ENCODE measurements at regions of chr1 and their contacts with region 1.

Region 1: GRCh38 chr1:161225534-161226319 is at the start of gene TOMM40L:
- DNase-seq: peak; percentile 96
- ATAC-seq: peak; percentile 98
- H3K4me3 Mint-ChIP-seq: peak within 1 kb of the TSS; percentile 95
- H3K27ac Mint-ChIP-seq: peak within 1 kb of the TSS; percentile 99
- H3K4me1 Mint-ChIP-seq: peaks cover 43% of the 10 kb centered on the region
- H3K27me3 Mint-ChIP-seq: no peaks in the 10 kb centered on the region
- total RNA-seq, gene TOMM40L: 19.1 to 22.0 TPM

Region 2: GRCh38 chr1:161098210-161099068 is 127.3 kb before region 1 on chr1 and contains the start of gene KLHDC9:
- CTCF ChIA-PET with region 1: no interaction called
- POLR2A ChIA-PET with region 1: no interaction called
- DNase-seq: peak; percentile 86
- ATAC-seq: peak; percentile 78
- H3K4me3 Mint-ChIP-seq: peak within 1 kb of the TSS; percentile 80
- H3K27ac Mint-ChIP-seq: peak within 1 kb of the TSS; percentile 91
- H3K4me1 Mint-ChIP-seq: peaks cover 30% of the 10 kb centered on the region
- H3K27me3 Mint-ChIP-seq: peaks cover 2% of the 10 kb centered on the region
- total RNA-seq, gene KLHDC9: 0.61 to 0.91 TPM

Region 3: DNA sequence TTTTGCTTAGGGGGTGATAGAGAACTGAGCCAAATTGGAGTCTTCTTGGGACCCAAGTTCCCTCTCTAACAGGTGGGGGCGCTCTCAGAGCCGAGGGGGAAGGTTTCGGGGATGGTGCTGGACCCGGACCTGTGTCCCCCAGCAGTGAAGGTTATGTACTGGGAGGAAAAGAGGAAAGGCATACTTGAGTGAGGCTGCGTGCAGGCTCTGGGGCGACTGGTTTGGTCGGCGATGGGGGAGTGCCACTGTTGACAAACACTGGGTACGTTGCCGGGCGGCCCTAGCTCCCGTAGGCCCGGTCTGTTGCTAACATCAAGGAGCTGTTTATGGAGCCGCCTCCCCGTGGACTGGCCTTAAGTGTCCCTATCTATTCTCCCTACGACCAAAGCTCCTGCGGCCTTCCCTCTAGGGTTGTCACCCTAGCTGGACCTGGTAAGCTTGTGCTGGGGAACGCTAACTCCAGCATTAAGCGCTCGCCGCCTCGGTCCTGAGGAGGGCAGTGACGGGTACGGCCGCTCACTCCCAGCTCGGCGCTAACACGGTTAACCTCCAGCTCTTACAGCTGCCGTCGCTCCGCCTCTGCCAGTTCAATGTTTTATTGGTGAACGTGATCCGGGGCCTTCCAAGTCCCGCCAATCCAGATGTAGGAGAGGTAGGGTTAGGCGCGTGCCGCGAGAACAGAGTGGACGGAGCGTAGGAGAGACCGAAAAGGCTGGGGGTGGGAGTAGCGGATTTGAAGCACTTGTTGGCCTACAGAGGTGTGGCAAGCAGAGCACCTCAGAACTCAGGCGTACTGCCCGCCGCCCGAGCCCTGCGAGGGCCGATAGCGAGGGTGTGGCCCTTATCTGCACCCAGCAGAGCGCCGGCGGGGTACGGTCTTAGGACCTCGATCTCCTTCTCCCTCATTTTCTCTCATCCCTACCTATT is 59.7 kb before region 1 on chr1 and contains the start of gene PPOX:
- CTCF ChIA-PET with region 1: interaction called, 35 read pairs
- POLR2A ChIA-PET with region 1: interaction called, 13 read pairs
- DNase-seq: peak; percentile 98
- ATAC-seq: peak; percentile 93
- H3K4me3 Mint-ChIP-seq: peak within 1 kb of the TSS; percentile 90
- H3K27ac Mint-ChIP-seq: peak within 1 kb of the TSS; percentile 96
- H3K4me1 Mint-ChIP-seq: peaks cover 36% of the 10 kb centered on the region
- H3K27me3 Mint-ChIP-seq: no peaks in the 10 kb centered on the region
- total RNA-seq, gene PPOX: 37.7 to 38.5 TPM

Region 4: DNA sequence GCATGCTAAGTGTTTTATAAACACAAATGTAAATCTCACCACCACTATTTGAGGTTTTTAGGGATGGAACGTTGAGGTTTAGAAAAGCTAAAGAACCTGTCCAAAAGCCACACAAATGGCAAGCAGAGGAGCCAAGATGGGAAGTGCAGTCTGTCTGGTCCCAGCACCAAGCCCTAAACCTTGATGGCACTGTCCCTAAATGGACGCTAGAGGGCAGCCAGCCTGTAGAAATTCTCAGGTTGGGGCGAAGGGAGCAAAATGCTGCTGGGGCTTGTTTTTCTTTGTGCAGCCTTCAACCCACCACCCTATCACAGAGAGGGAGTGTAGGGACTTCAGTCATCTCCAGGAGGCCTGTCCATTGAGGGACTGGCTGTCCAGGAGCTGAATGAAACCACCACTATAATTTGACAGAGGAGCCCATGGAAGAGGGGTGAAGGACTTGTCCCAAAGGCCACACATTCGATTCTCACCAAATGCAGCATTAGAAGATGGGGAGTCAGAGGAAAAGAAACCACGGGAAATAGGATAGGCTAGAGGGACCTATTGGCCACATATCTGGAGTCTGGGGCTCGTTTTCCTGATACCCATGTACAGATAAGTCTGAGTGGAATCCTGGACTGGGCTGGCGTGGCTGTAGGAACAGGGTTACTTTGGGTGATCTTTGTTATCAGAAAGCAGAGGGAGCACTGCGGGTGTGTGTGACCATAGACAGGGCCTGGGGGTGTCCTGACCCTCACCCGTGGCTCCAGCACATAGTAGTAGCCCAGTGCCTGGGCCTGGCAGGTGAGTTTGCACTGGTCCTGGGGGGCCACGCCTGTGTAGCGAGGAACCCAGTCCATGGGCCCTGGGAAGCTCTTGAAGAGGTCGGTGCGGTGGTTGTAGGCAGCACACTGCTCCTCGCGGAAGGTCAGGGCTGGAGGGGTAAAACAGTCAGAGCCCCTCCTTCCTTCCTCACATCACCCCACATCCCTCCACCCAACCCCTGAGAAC is 33.0 kb before region 1 on chr1:
- CTCF ChIA-PET with region 1: interaction called, 331 read pairs
- POLR2A ChIA-PET with region 1: interaction called, 3 read pairs
- DNase-seq: peak; percentile 82
- ATAC-seq: peak; percentile 93
- H3K4me3 Mint-ChIP-seq: no peak overlapping the region
- H3K27ac Mint-ChIP-seq: peak overlapping the region; percentile 82
- H3K4me1 Mint-ChIP-seq: peaks cover 57% of the 10 kb centered on the region
- H3K27me3 Mint-ChIP-seq: no peaks in the 10 kb centered on the region

Region 5: DNA sequence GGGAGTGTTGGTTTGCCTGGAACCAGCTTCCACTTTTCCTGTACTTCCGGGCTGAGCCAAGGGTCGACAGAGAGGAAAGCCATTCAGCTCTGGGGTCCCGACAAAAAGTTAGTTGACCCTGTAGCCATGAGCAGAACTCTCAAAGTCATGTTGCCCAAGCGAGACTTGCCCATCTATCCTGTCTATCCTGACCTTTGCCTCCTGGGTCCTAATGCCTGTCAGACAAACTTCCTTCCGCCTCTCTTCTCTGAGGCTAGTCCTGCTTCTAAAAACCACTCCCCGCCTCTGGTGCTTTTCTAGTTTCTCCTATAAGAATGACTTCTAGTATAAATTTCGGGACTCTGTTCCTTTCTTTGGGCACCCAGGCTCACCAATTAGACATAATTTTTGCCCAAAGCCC is 25.1 kb after region 1 on chr1:
- CTCF ChIA-PET with region 1: interaction called, 18 read pairs
- POLR2A ChIA-PET with region 1: no interaction called
- DNase-seq: no peak
- ATAC-seq: no peak
- H3K4me3 Mint-ChIP-seq: no peak overlapping the region
- H3K27ac Mint-ChIP-seq: no peak overlapping the region
- H3K4me1 Mint-ChIP-seq: no peaks in the 10 kb centered on the region
- H3K27me3 Mint-ChIP-seq: peaks cover 4% of the 10 kb centered on the region

Region 6: GRCh38 chr1:161292631-161293030 is 66.9 kb after region 1 on chr1:
- CTCF ChIA-PET with region 1: interaction called, 33 read pairs
- POLR2A ChIA-PET with region 1: no interaction called
- DNase-seq: no peak
- ATAC-seq: no peak
- H3K4me3 Mint-ChIP-seq: no peak overlapping the region
- H3K27ac Mint-ChIP-seq: no peak overlapping the region
- H3K4me1 Mint-ChIP-seq: peaks cover 3% of the 10 kb centered on the region
- H3K27me3 Mint-ChIP-seq: no peaks in the 10 kb centered on the region

Region 7: GRCh38 chr1:161314201-161314981 is 88.7 kb after region 1 on chr1 and contains the start of gene SDHC:
- CTCF ChIA-PET with region 1: interaction called, 17 read pairs
- POLR2A ChIA-PET with region 1: interaction called, 4 read pairs
- DNase-seq: peak; percentile 93
- ATAC-seq: peak; percentile 97
- H3K4me3 Mint-ChIP-seq: peak within 1 kb of the TSS; percentile 99
- H3K27ac Mint-ChIP-seq: peak within 1 kb of the TSS; percentile 97
- H3K4me1 Mint-ChIP-seq: peaks cover 29% of the 10 kb centered on the region
- H3K27me3 Mint-ChIP-seq: peaks cover 3% of the 10 kb centered on the region
- total RNA-seq, gene SDHC: 151 to 163 TPM

Region 8: GRCh38 chr1:161374373-161374772 is 148.6 kb after region 1 on chr1:
- CTCF ChIA-PET with region 1: interaction called, 223 read pairs
- POLR2A ChIA-PET with region 1: no interaction called
- DNase-seq: no peak
- ATAC-seq: no peak
- H3K4me3 Mint-ChIP-seq: no peak overlapping the region
- H3K27ac Mint-ChIP-seq: no peak overlapping the region
- H3K4me1 Mint-ChIP-seq: no peaks in the 10 kb centered on the region
- H3K27me3 Mint-ChIP-seq: no peaks in the 10 kb centered on the region

Measured in activated CD8-positive, alpha-beta T cell treated with anti-CD3 and anti-CD28 coated beads, Interleukin-2, amount 10 ng/mL, durations not matched to agents 7 days and 5 days (primary cell).